Panc1 (cell line): ENCODE measurements at regions of chr1 and their contacts with region 1.

Region 1: DNA sequence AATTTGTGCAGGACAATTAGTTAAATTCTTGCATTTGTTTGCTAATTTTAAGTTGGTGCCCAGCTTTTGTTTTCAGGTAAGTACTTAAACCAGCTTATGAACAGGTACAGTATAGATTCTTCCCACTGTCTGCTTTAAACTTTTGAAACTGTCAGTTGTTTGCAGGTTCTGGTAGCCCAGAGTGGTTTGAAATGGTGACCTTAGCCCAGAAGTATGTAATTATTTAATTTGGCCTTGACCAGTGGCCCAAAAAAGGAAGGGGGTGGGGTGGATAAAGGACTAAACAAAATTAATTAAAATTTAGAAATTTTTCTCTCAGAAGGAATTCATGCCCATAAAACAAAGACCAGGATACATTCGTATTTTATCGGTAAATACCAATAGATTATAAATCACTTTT is 69.0 kb downstream of the PTBP2 start:
- DNase-seq: no peak
- ATAC-seq: no peak
- H3K4me3 ChIP-seq: no peak overlapping the region
- H3K27ac ChIP-seq: no peak overlapping the region
- H3K4me1 ChIP-seq: no peaks in the 10 kb centered on the region
- H3K27me3 ChIP-seq: no peaks in the 10 kb centered on the region
- CTCF ChIP-seq: no peak

Region 2: DNA sequence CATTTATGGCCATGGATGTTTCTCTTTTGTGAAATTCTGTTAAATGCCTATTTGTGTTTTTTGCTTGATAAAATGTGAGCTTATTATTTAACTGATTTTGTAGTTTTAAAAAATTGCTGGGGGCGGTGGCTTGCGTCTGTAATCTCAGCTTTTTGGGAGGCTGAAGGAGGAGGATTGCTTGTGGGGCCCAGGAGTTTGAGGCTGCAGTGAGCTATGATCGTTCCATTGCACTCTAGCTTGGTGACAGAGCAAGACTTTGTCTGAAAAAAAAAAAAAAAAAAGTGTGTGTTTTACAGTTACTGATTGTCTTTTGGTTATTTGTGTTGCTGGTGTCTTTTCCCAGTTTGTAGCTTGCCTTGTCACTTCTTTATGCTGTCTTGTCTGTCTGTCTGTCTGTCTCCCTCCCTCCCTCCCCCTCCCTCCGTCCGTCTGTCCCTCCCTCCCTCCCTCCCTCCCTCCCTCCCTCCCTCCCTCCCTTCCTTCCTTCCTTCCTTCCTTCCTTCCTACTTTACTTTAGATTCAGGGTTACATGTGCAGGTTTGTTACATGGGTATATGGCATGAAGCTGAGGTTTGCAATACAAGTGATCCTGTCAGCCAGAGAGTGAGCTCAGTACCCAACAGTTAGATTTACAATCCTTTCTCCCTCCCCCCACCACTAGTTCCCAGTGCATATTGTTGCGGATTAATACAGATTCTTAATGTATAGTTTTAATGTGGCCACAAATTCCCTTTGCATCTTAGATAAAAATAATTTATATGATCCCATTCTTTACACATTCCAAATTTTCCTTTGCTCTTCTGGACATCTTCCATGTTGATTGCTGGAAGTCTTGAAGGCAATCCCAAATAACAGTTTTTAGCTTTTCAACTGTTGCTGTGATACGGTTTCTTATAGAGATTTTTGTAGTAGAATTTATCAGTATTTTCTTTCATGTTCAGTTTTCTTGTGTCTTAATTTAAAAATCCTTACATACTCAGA is 43.9 kb before region 1 on chr1:
- CTCF ChIA-PET with region 1: no interaction called
- POLR2A ChIA-PET with region 1: interaction called, 10 read pairs
- in situ Hi-C with region 1: no loop called
- intact Hi-C with region 1: no loop called
- DNase-seq: no peak
- ATAC-seq: no peak
- H3K4me3 ChIP-seq: no peak overlapping the region
- H3K27ac ChIP-seq: no peak overlapping the region
- H3K4me1 ChIP-seq: no peaks in the 10 kb centered on the region; the same call in 1 of the 2 replicates
- H3K27me3 ChIP-seq: no peaks in the 10 kb centered on the region
- CTCF ChIP-seq: no peak